HEK293 (cell line): ENCODE measurements at regions of chr9 and their contacts with region 1.

Region 1: GRCh38 chr9:69180670-69181069 is 6.6 kb downstream of the TJP2 start:
- H3K4me3 ChIP-seq: no peak overlapping the region
- H3K27ac ChIP-seq: no peak overlapping the region
- H3K4me1 ChIP-seq: peaks cover 20% of the 10 kb centered on the region
- CTCF ChIP-seq: no peak

Region 2: GRCh38 chr9:69066955-69067354 is 113.7 kb before region 1 on chr9:
- CTCF ChIA-PET with region 1: no interaction called
- POLR2A ChIA-PET with region 1: interaction called, 10 read pairs
- H3K4me3 ChIP-seq: no peak overlapping the region
- H3K27ac ChIP-seq: no peak overlapping the region
- H3K4me1 ChIP-seq: no peaks in the 10 kb centered on the region
- CTCF ChIP-seq: no peak

Region 3: DNA sequence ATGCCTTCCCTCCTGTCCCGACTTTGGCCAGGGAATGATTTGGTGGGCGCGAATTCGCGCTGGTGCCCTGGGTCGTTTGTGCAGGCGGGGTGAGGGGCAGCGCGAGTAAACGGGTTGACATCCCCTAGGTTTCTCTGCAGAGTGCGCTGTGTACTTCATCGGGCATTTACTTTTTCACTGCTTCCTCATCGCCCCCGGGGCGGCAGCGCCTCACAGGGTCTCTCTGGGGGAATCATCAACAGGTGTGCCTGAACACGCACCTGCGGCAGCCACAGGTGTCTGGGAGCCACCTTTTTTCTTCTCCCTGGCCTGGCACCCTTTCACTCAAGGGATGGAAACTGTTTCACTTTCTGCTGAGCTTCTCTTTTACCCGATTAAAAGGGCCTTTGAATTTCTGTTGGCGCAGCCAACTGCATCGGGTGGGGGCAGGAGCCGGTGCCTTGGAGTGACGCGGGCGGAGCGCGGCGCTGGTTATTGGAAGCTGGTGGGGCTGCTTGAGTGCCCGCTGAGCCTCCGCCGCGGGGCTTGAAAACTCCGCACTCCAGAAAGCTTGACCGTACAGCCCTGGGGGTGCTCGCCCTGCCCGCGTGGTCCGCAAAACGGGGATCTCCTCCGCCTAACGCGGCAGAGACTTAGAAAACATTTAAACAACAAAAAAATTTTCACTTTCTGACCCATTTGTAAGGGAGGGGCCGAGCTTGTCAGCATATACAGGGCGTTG is 58.7 kb before region 1 on chr9:
- CTCF ChIA-PET with region 1: interaction called, 9 read pairs
- POLR2A ChIA-PET with region 1: interaction called, 13 read pairs
- H3K4me3 ChIP-seq: peak overlapping the region; percentile 83
- H3K27ac ChIP-seq: peak overlapping the region; percentile 90
- H3K4me1 ChIP-seq: peaks cover 3% of the 10 kb centered on the region; the same call in 1 of the 2 replicates
- CTCF ChIP-seq: peak; percentile 12; the same call in 1 of the 2 replicates